ENCODE measurements at regions of chr1 and their contacts with region 1.

Region 1: DNA sequence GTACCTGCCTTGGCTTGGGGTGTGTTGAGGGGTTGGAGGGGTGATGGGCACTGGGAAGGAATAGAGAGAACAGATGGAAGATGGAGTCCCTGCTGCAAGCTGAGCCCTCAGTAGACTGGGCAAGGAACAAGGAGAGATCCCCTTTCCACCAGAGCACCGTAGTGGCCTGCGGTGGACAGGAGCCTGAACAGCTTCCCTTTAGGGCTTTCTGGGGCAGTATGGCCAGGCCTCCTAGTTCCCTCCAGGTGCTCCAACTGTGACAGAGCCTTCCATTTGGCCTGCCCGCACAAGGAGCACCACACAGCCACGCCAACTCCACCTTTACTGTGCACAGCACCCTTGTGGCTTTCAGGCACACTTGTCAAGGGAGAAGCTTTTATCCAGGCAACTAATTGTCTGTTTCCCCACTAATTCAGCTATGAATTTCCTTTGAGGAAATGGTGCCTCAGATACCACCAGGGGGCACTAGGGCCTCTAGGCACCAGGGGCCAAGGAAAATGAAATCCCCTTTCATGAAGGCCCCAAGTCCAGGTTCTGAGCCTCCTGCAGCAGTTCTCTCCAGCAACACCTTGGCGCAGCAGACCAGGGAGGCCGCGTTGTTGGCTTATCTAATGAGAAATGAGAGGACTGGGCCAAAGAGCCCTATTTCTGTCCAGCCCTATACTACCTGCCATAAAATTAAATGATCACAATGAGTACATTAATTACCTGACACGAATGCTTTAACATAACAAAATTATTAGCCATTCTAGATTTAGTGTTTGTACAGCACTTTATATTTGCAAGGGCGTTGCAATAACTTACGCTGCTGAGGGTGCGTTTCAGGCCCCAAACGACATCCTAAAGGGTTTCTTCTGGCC is 23.1 kb upstream of the ERI3 start:
- DNase-seq: no peak
- H3K4me3 ChIP-seq: no peak overlapping the region
- H3K27me3 ChIP-seq: peaks cover 13% of the 10 kb centered on the region
- CTCF ChIP-seq: peak; percentile 75

Region 2: DNA sequence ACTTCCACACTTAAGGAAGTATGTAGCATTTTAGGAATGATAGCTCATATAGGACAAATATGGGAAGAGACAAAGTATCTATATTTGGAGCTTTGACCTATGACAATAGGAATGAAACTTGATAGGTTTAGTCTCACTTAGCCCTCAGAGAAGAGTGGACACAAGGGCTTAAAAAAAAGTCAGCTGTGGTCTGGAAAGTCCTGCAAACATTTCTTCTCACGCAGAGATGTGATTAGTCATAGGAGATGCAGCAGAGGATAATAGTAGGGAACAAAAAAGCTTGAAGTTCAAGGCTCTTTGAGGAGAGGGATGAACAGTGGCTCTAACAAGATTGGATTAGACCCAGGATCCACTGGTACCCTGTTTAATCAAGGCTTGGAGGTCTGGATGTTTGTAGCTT is 12.1 kb after region 1 on chr1:
- CTCF ChIA-PET with region 1: interaction called, 19 read pairs
- POLR2A ChIA-PET with region 1: no interaction called
- DNase-seq: peak; percentile 53
- H3K4me3 ChIP-seq: no peak overlapping the region
- H3K27me3 ChIP-seq: peaks cover 2% of the 10 kb centered on the region; the same call in 1 of the 2 replicates
- CTCF ChIP-seq: no peak